ENCODE measurements at regions of chrX and their contacts with region 1.

Region 1: GRCh38 chrX:70030301-70030767 is 19.4 kb downstream of the AWAT2 start:
- DNase-seq: peak; percentile 52
- H3K4me3 ChIP-seq: no peak overlapping the region; a peak in 1 of 4 replicates
- H3K27ac ChIP-seq: no peak overlapping the region
- H3K4me1 ChIP-seq: no peaks in the 10 kb centered on the region
- H3K27me3 ChIP-seq: no peaks in the 10 kb centered on the region
- CTCF ChIP-seq: peak; percentile 82
- EP300 ChIP-seq: no peak
- RAD21 ChIP-seq: peak; percentile 68

Region 2: DNA sequence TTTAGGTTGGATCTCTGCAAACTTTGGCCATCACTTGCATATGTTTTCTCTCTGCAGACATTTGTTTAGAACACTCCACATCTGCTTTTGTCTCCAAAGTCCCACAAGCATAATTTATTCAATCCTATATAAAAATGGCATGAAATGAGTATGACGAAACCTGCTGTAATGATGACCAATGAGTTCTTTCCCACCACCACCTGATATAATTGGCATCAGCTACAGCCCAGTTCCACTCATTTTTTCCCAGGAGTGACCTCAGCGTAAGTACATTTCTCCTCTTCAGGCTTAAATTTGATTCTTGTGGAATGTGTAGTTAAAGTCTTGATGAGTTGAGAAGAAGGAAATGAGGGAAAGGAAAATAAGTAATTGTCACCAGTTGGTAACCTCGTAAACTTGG is 185.7 kb before region 1 on chrX:
- CTCF ChIA-PET with region 1: no interaction called
- POLR2A ChIA-PET with region 1: no interaction called
- DNase-seq: no peak
- H3K4me3 ChIP-seq: no peak overlapping the region
- H3K27ac ChIP-seq: no peak overlapping the region
- H3K4me1 ChIP-seq: no peaks in the 10 kb centered on the region
- H3K27me3 ChIP-seq: no peaks in the 10 kb centered on the region
- CTCF ChIP-seq: no peak
- EP300 ChIP-seq: no peak
- RAD21 ChIP-seq: no peak

Region 3: GRCh38 chrX:70013466-70014381 is 16.6 kb before region 1 on chrX:
- CTCF ChIA-PET with region 1: interaction called, 23 read pairs
- POLR2A ChIA-PET with region 1: no interaction called
- DNase-seq: no peak
- H3K4me3 ChIP-seq: no peak overlapping the region
- H3K27ac ChIP-seq: no peak overlapping the region
- H3K4me1 ChIP-seq: no peaks in the 10 kb centered on the region
- H3K27me3 ChIP-seq: peaks cover 14% of the 10 kb centered on the region; the same call in 1 of the 2 replicates
- CTCF ChIP-seq: no peak
- EP300 ChIP-seq: no peak
- RAD21 ChIP-seq: no peak

Region 4: GRCh38 chrX:70042399-70043371 is 12.4 kb after region 1 on chrX:
- CTCF ChIA-PET with region 1: interaction called, 47 read pairs
- POLR2A ChIA-PET with region 1: no interaction called
- DNase-seq: no peak
- H3K4me3 ChIP-seq: no peak overlapping the region
- H3K27ac ChIP-seq: no peak overlapping the region
- H3K4me1 ChIP-seq: no peaks in the 10 kb centered on the region
- H3K27me3 ChIP-seq: no peaks in the 10 kb centered on the region
- CTCF ChIP-seq: no peak
- EP300 ChIP-seq: no peak
- RAD21 ChIP-seq: no peak

Region 5: GRCh38 chrX:70117713-70118112 is 87.4 kb after region 1 on chrX:
- CTCF ChIA-PET with region 1: no interaction called
- POLR2A ChIA-PET with region 1: no interaction called
- DNase-seq: no peak
- H3K4me3 ChIP-seq: no peak overlapping the region
- H3K27ac ChIP-seq: no peak overlapping the region
- H3K4me1 ChIP-seq: no peaks in the 10 kb centered on the region
- H3K27me3 ChIP-seq: peaks cover 6% of the 10 kb centered on the region; the same call in 1 of the 2 replicates
- CTCF ChIP-seq: no peak
- EP300 ChIP-seq: no peak
- RAD21 ChIP-seq: no peak

Region 6: GRCh38 chrX:70244881-70245280 is 214.5 kb after region 1 on chrX:
- CTCF ChIA-PET with region 1: no interaction called
- POLR2A ChIA-PET with region 1: no interaction called
- DNase-seq: no peak
- H3K4me3 ChIP-seq: no peak overlapping the region
- H3K27ac ChIP-seq: no peak overlapping the region
- H3K4me1 ChIP-seq: no peaks in the 10 kb centered on the region
- H3K27me3 ChIP-seq: peaks cover 7% of the 10 kb centered on the region; the same call in 1 of the 2 replicates
- CTCF ChIP-seq: no peak
- EP300 ChIP-seq: no peak
- RAD21 ChIP-seq: no peak

Measured in SK-N-SH (cell line).